Heart right ventricle (tissue), 16 donors: ENCODE measurements at regions of chr10 and their contacts with region 1.

Region 1: GRCh38 chr10:44300666-44301649 is 83.9 kb downstream of the CXCL12 start:
- DNase-seq: peak in 1 of 2 donors; percentile 48
- ATAC-seq: peak in 6 of 8 donors; percentile 43 to 89 (median 76)
- H3K4me3 ChIP-seq: no peak overlapping the region
- H3K27ac ChIP-seq: peak overlapping the region in 1 of 10 donors; percentile 45
- H3K4me1 ChIP-seq: peaks cover 0 to 12% (median 3%) of the 10 kb centered on the region in 9 donors
- H3K27me3 ChIP-seq: no peaks in the 10 kb centered on the region
- CTCF ChIP-seq: no peak

Region 2: DNA sequence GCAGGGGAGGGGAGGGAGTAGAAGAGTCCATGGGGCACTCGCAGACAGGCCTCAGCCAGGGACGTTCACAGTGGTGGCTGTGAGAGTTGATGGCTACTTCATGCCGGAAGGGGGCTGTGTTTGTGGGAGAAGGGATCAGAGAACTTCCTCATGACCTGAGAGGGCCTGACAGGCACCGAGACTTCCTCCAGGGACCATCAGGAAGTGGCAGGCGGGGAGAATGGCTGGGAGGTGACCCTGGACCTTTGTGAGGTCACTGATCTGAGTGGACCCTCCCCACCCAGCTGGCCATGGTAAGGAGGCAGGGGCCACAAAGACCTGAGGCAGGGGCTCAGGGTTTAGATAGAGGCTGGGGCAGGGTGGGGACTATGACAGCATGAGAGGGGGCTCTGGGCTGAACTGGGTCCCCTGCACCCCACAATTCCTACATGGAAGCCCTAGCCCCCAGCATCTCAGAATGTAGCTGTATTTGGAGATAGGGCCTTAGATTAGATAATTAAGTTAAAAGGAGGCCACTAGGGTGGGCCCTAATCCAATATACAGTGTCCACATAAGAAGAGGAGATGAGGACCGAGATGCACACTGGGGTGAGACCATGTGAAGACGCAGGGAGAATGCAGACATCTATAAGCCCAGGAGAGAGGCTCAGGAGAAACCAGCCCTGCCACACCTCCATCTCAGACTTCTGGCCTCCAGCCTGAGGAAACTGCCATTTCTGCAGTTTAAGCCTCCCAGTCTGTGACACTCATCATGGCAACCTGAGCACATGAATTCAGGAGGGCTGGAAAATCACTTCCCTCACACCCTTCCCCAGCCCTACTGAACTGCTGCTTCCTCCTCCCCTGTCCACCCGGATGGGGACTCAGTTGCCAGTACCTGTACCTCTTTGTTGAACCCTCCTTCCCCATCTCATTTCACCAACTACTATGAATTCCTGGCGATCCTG is 378.4 kb before region 1 on chr10:
- intact Hi-C with region 1: loop called in 2 of 10 experiments (anchors 10 kb)
- DNase-seq: no peak
- ATAC-seq: peak in 7 of 8 donors; percentile 31 to 72 (median 47)
- H3K4me3 ChIP-seq: no peak overlapping the region
- H3K27ac ChIP-seq: no peak overlapping the region
- H3K4me1 ChIP-seq: peaks cover 0 to 13% (median 8%) of the 10 kb centered on the region in 9 donors
- H3K27me3 ChIP-seq: no peaks in the 10 kb centered on the region
- CTCF ChIP-seq: peak in 3 of 9 donors; percentile 13 to 39 (median 27)

Region 3: DNA sequence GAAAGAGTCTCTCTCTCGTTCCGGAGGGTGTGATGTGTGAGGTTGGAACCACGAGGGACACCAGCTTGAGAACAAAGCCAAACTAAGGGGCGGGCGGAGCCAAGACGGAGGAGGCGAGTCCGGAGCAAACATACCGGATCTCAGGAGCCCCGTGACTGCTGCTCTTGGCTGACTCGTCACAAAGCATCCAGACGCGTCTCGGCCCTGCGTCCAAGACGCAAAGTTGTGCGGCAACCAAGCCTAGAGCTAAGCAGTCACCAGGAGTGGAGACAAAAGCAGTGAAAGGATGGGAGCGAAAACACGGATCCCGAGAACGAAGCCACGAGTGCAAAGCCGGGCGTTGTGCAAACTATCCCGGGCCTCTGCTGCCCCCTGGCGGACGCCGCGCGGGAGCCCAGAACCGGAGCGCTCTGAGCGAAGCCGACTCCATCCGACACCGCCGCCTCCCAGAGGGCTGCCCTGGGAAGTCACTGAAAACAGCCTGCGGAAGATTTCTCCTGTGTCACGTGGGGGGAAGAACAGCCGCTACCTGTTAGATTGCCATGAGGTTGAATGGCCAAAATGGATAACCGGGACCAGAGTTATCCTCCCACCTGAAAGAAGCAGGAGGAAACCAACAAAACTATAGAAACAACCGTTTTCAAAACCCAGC is 563.8 kb after region 1 on chr10:
- intact Hi-C with region 1: loop called in 1 of 10 experiments (anchors 10 kb)
- DNase-seq: peak; percentile 91 to 95
- ATAC-seq: peak; percentile 92 to 98 (median 97)
- H3K4me3 ChIP-seq: peak overlapping the region; percentile 29 to 60 (median 54)
- H3K27ac ChIP-seq: peak overlapping the region; percentile 0 to 72 (median 63)
- H3K4me1 ChIP-seq: peaks cover 3 to 35% (median 16%) of the 10 kb centered on the region in 9 donors
- H3K27me3 ChIP-seq: peaks cover 0 to 30% (median 7%) of the 10 kb centered on the region in 7 donors
- CTCF ChIP-seq: peak; percentile 95 to 99 (median 98)